PC-3 (cell line): ENCODE measurements at regions of chr2 and their contacts with region 1.

Region 1: GRCh38 chr2:224357098-224357901 is 44.6 kb downstream of the FAM124B start:
- DNase-seq: peak; percentile 75
- ATAC-seq: peak; percentile 47
- H3K4me3 ChIP-seq: no peak overlapping the region
- H3K27ac ChIP-seq: no peak overlapping the region
- H3K4me1 ChIP-seq: peaks cover 16% of the 10 kb centered on the region
- H3K27me3 ChIP-seq: no peaks in the 10 kb centered on the region; the same call in 1 of the 2 replicates
- CTCF ChIP-seq: peak; percentile 87

Region 2: DNA sequence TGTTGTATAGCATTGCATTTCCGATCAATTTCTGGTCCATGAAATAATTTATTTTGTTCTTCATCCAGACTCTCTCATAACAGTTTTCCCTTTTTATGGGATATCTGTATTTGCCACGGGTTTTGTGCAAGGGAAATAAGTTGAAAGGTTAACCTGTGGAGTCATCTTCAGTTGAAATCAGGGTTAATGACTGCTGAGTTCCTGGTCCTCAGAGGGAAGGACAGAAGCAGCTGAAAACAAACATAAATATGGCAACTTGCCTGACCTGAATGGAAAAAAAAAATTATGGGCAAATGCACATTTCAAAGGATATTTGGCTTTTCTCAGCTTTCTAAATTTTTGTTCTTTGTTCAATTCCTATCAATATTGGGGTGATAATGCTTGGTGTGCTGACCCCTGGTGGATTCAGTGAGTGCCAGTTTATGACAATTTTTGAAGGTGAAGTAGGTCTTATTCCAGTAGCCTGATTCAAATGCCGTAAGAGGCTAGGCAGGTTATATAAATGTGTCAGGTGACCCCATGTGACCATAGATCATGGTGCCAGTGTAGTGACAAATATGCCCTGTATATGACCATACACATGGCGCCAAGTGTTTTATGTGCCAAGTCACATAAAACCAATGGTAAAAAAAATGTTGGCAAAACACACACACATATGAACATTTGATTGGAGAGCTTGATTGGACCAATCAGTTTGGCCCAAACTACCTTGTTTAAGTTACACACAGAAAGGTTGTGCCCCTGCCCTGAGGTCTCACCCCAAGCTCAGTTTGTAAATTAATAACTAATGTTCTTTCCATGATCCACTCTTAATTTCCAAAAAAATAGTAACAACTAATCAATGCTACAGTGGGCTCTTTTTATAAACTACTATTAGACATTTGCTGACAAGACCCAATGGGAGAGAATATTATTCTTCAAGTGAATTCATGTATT is 92.2 kb after region 1 on chr2:
- CTCF ChIA-PET with region 1: no interaction called
- POLR2A ChIA-PET with region 1: no interaction called
- intact Hi-C with region 1: loop called (anchors 2 kb)
- DNase-seq: peak; percentile 48
- ATAC-seq: peak; percentile 55
- H3K4me3 ChIP-seq: no peak overlapping the region
- H3K27ac ChIP-seq: no peak overlapping the region
- H3K4me1 ChIP-seq: peaks cover 4% of the 10 kb centered on the region; the same call in 1 of the 2 replicates
- H3K27me3 ChIP-seq: no peaks in the 10 kb centered on the region
- CTCF ChIP-seq: peak; percentile 82

Region 3: GRCh38 chr2:224778474-224778877 is 421.2 kb after region 1 on chr2:
- CTCF ChIA-PET with region 1: no interaction called
- POLR2A ChIA-PET with region 1: no interaction called
- intact Hi-C with region 1: loop called (anchors 1 kb)
- DNase-seq: peak; percentile 77
- ATAC-seq: peak; percentile 73
- H3K4me3 ChIP-seq: no peak overlapping the region
- H3K27ac ChIP-seq: no peak overlapping the region
- H3K4me1 ChIP-seq: no peaks in the 10 kb centered on the region
- H3K27me3 ChIP-seq: no peaks in the 10 kb centered on the region
- CTCF ChIP-seq: peak; percentile 89